ENCODE measurements at regions of chr1 and their contacts with region 1.

Region 1: DNA sequence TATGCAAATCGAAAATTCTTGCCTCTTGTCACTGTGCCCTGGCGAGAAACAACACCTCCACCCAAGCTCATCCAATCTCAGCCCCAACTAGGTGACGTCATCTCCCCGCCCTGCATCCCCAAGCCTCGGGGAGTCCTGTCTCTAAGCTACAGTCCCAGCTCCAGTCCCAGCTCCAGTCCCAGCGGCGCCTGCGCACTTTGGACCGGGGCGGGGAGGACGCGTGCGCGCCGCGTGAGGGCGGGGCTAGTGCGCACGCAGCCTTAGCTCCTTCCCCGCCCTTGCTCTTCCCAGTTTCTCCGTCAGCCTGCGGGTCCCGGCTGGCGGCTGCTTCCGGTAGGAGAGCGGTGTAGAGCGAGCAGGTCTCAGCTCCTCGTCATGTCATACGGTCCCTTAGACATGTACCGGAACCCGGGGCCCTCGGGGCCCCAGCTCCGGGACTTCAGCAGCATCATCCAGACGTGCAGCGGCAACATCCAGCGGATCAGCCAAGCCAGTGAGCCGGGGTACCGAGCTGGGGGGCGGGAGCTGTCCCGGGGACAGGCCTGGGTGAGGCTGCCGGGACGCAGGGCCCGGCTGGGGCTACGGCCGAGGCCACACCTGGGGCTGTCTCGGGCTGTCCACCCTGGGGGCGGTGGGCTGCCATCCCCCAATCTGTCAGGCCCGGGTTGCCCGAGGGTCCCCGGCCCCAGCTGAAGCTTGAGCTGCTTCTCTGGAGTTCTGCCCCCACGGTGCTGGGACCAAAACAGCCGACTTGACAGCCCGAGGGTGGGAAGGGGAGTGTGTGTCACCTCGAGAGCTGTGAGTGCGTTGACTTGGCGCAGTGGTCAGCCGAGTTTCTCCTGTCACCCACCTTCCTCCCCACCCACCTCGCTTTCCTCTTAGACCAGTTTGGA is at the start of gene STX12:
- DNase-seq: peak; percentile 97
- ATAC-seq: peak; percentile 93
- H3K4me3 Mint-ChIP-seq: peak within 1 kb of the TSS; percentile 93
- H3K27ac Mint-ChIP-seq: peak within 1 kb of the TSS; percentile 98
- H3K4me1 Mint-ChIP-seq: peaks cover 37% of the 10 kb centered on the region
- H3K27me3 Mint-ChIP-seq: no peaks in the 10 kb centered on the region
- CTCF ChIP-seq: no peak
- total RNA-seq, gene STX12: 33.5 and 42.4 TPM in 2 replicates

Region 2: GRCh38 chr1:27021354-27022031 is 751.7 kb before region 1 on chr1:
- CTCF ChIA-PET with region 1: no interaction called
- POLR2A ChIA-PET with region 1: no interaction called
- intact Hi-C with region 1: no loop called
- DNase-seq: no peak
- ATAC-seq: no peak
- H3K4me3 Mint-ChIP-seq: no peak overlapping the region
- H3K27ac Mint-ChIP-seq: no peak overlapping the region
- H3K4me1 Mint-ChIP-seq: no peaks in the 10 kb centered on the region
- H3K27me3 Mint-ChIP-seq: no peaks in the 10 kb centered on the region
- CTCF ChIP-seq: no peak

Region 3: GRCh38 chr1:27489910-27490741 is 283.1 kb before region 1 on chr1 and contains the start of gene WASF2:
- CTCF ChIA-PET with region 1: no interaction called
- POLR2A ChIA-PET with region 1: no interaction called
- intact Hi-C with region 1: no loop called
- DNase-seq: peak; percentile 94
- ATAC-seq: peak; percentile 88
- H3K4me3 Mint-ChIP-seq: peak within 1 kb of the TSS; percentile 95
- H3K27ac Mint-ChIP-seq: peak within 1 kb of the TSS; percentile 100
- H3K4me1 Mint-ChIP-seq: peaks cover 59% of the 10 kb centered on the region
- H3K27me3 Mint-ChIP-seq: no peaks in the 10 kb centered on the region
- CTCF ChIP-seq: no peak
- total RNA-seq, gene WASF2: 136 and 137 TPM in 2 replicates

Region 4: GRCh38 chr1:27609210-27609555 is 164.0 kb before region 1 on chr1:
- CTCF ChIA-PET with region 1: interaction called, 3 read pairs
- POLR2A ChIA-PET with region 1: no interaction called
- intact Hi-C with region 1: loop called (anchors 1 kb)
- DNase-seq: no peak
- ATAC-seq: peak; percentile 18
- H3K4me3 Mint-ChIP-seq: no peak overlapping the region
- H3K27ac Mint-ChIP-seq: no peak overlapping the region
- H3K4me1 Mint-ChIP-seq: peaks cover 15% of the 10 kb centered on the region
- H3K27me3 Mint-ChIP-seq: no peaks in the 10 kb centered on the region
- CTCF ChIP-seq: no peak

Region 5: DNA sequence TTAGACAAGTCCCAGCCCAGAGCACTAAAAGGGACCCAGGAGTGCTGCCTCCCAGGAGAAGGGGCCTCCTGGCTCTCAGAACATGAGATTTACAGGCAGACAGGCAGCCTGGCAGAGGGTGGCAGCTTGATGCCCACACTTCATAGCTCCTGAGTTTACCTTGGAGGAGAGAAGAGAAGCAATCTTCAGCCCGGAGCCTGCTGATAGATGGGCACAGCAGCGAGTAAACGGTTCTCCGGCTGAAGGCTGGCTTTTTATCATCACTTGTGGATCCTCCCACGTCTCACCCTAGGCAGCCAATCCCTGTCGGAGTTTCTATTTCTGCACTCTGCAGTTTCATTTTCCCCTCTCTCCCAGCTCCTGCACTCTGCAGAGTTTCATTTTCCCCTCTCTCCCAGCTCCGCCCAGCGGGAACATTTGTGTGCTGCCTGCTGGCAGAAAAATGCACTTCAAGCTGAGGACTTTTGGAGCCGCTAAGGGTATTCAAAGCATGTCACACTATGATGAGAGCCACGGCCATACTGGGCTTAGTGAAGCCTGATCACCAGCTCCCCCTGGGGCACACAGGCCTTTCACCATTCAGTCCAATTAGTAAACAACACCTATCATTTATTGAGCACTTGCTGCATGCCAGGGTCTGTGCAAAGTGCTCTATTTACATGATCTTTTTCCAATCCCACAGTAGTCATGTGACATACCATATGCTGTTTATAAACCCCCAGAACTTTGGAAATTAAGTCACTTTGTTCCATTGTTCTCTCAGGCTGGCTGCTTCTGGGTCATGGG is 101.0 kb before region 1 on chr1 and contains the start of gene IFI6:
- CTCF ChIA-PET with region 1: interaction called, 5 read pairs
- POLR2A ChIA-PET with region 1: interaction called, 3 read pairs
- intact Hi-C with region 1: loop called (anchors 2 kb)
- DNase-seq: peak; percentile 63
- ATAC-seq: peak; percentile 90
- H3K4me3 Mint-ChIP-seq: peak within 1 kb of the TSS; percentile 97
- H3K27ac Mint-ChIP-seq: peak within 1 kb of the TSS; percentile 98
- H3K4me1 Mint-ChIP-seq: peaks cover 31% of the 10 kb centered on the region
- H3K27me3 Mint-ChIP-seq: no peaks in the 10 kb centered on the region
- CTCF ChIP-seq: no peak
- total RNA-seq, gene IFI6: 10.9 and 11.4 TPM in 2 replicates

Region 6: GRCh38 chr1:27830621-27831424 is 57.6 kb after region 1 on chr1 and contains the start of gene PPP1R8:
- CTCF ChIA-PET with region 1: interaction called, 3 read pairs
- POLR2A ChIA-PET with region 1: interaction called, 34 read pairs
- intact Hi-C with region 1: loop called (anchors 1 kb)
- DNase-seq: peak; percentile 84
- ATAC-seq: peak; percentile 98
- H3K4me3 Mint-ChIP-seq: peak within 1 kb of the TSS; percentile 95
- H3K27ac Mint-ChIP-seq: peak within 1 kb of the TSS; percentile 89
- H3K4me1 Mint-ChIP-seq: peaks cover 22% of the 10 kb centered on the region
- H3K27me3 Mint-ChIP-seq: no peaks in the 10 kb centered on the region
- CTCF ChIP-seq: no peak
- total RNA-seq, gene PPP1R8: 48.3 and 52.0 TPM in 2 replicates

Region 7: GRCh38 chr1:28736450-28737306 is 963.5 kb after region 1 on chr1 and contains the start of gene YTHDF2:
- CTCF ChIA-PET with region 1: no interaction called
- POLR2A ChIA-PET with region 1: no interaction called
- intact Hi-C with region 1: loop called (anchors 5 kb)
- DNase-seq: peak; percentile 96
- ATAC-seq: peak; percentile 93
- H3K4me3 Mint-ChIP-seq: peak within 1 kb of the TSS; percentile 96
- H3K27ac Mint-ChIP-seq: peak within 1 kb of the TSS; percentile 91
- H3K4me1 Mint-ChIP-seq: peaks cover 30% of the 10 kb centered on the region
- H3K27me3 Mint-ChIP-seq: no peaks in the 10 kb centered on the region
- CTCF ChIP-seq: peak; percentile 83
- total RNA-seq, gene YTHDF2: 70.6 and 81.2 TPM in 2 replicates